ENCODE measurements at regions of chr3 and their contacts with region 1.

Region 1: GRCh38 chr3:66998113-66998903 is at the start of gene KBTBD8:
- DNase-seq: peak; percentile 99
- ATAC-seq: peak; percentile 86
- H3K4me3 ChIP-seq: peak within 1 kb of the TSS; percentile 68 to 90 (median 82)
- H3K4me3 Mint-ChIP-seq: peak within 1 kb of the TSS; percentile 96
- H3K27ac ChIP-seq: peak within 1 kb of the TSS; percentile 79 to 91
- H3K27ac Mint-ChIP-seq: peak within 1 kb of the TSS; percentile 98
- H3K4me1 ChIP-seq: peaks cover 36 to 41% of the 10 kb centered on the region in 2 donors
- H3K4me1 Mint-ChIP-seq: peaks cover 44% of the 10 kb centered on the region
- H3K27me3 ChIP-seq: no peaks in the 10 kb centered on the region
- H3K27me3 Mint-ChIP-seq: peaks cover 4% of the 10 kb centered on the region
- CTCF ChIP-seq: no peak
- total RNA-seq, gene KBTBD8: 27.6 and 32.6 TPM in 2 replicates

Region 2: DNA sequence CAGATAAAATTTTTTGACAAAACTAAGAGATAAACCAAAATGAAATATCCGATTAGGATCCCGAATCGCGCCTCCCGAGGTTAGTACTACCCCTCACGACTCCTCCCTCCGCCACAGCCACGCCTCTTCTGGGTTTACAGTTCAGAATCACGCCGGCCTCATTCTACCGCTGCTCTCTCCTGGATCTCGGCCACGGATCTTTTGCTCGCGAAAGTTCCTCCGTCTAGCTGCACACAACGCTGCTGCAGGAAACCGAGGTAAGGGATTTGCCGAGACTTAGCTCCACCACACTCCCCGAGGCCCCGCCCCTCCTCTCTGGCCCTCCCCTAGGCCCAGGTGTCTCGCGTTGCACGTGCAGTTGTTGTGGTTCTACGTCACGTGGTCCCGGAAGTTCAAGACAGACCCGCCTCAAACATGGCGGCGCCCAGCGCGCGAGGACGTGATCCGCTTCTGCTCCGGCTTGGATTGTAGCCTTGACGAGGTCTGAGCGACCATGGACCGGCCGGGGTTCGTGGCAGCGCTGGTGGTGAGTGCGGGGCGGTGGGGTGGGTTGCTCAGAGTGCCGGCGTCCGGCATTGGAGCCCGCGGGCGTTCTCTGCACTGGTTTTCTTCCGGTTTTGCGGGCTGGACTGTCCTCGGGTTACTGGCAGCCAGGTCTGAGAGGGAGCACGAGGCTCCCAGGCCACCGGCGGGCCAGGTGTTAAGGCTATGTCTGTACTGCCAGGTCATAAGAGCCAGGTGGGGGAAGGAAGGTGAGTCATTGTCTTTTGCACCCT is 777.5 kb before region 1 on chr3 and contains the start of gene SLC25A26:
- CTCF ChIA-PET with region 1: no interaction called
- POLR2A ChIA-PET with region 1: no interaction called
- intact Hi-C with region 1: loop called (anchors 2 kb)
- DNase-seq: peak; percentile 96
- ATAC-seq: peak; percentile 95
- H3K4me3 ChIP-seq: peak within 1 kb of the TSS; percentile 74 to 96 (median 79)
- H3K4me3 Mint-ChIP-seq: peak within 1 kb of the TSS; percentile 100
- H3K27ac ChIP-seq: peak within 1 kb of the TSS; percentile 64 to 83
- H3K27ac Mint-ChIP-seq: peak within 1 kb of the TSS; percentile 96
- H3K4me1 ChIP-seq: peaks cover 10 to 14% of the 10 kb centered on the region in 2 donors
- H3K4me1 Mint-ChIP-seq: peaks cover 35% of the 10 kb centered on the region
- H3K27me3 ChIP-seq: no peaks in the 10 kb centered on the region
- H3K27me3 Mint-ChIP-seq: peaks cover 6% of the 10 kb centered on the region
- CTCF ChIP-seq: no peak
- total RNA-seq, gene SLC25A26: 19.7 and 23.8 TPM in 2 replicates

Region 3: DNA sequence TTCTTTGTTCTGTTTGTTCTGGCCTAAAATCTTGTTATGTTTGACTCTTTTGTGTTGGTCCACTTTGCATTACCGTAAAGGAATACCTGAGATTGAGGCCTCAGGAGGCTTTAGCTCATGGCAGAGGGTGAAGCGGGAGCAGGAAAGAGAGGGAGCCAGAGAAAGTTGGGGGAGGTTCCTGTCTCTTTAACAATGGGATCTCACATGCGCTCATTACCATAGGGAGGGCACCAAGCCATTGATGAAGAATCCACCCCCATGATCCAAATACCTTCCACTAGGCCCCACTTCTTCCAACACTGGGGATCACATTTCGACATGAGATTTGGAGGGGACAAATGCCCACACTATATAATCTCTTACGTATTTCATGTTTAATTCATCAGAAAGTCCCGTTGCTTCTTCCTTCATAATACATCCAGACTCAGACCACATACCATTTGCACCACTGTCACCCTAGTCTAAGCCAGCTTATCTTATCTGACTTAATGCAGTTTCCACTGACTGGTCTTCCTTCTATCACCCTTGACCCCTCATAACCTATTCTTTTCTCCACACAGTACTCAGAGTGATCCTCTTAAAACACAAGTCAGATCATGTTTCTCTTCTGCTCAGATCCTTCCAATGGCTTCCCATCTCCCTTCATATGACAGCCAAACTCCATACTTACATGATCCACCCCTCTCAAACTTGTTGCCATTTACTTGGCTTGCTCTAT is 13.3 kb after region 1 on chr3:
- CTCF ChIA-PET with region 1: interaction called, 3 read pairs
- POLR2A ChIA-PET with region 1: interaction called, 5 read pairs
- intact Hi-C with region 1: loop called (anchors 1 kb)
- DNase-seq: no peak
- ATAC-seq: no peak
- H3K4me3 ChIP-seq: no peak overlapping the region
- H3K4me3 Mint-ChIP-seq: no peak overlapping the region
- H3K27ac ChIP-seq: peak overlapping the region in 1 of 2 donors; percentile 42
- H3K27ac Mint-ChIP-seq: peak overlapping the region; percentile 38
- H3K4me1 ChIP-seq: peaks cover 16 to 22% of the 10 kb centered on the region in 2 donors
- H3K4me1 Mint-ChIP-seq: peaks cover 68% of the 10 kb centered on the region
- H3K27me3 ChIP-seq: no peaks in the 10 kb centered on the region
- H3K27me3 Mint-ChIP-seq: no peaks in the 10 kb centered on the region
- CTCF ChIP-seq: no peak